ENCODE measurements at regions of chr2 and their contacts with region 1.

Region 1: DNA sequence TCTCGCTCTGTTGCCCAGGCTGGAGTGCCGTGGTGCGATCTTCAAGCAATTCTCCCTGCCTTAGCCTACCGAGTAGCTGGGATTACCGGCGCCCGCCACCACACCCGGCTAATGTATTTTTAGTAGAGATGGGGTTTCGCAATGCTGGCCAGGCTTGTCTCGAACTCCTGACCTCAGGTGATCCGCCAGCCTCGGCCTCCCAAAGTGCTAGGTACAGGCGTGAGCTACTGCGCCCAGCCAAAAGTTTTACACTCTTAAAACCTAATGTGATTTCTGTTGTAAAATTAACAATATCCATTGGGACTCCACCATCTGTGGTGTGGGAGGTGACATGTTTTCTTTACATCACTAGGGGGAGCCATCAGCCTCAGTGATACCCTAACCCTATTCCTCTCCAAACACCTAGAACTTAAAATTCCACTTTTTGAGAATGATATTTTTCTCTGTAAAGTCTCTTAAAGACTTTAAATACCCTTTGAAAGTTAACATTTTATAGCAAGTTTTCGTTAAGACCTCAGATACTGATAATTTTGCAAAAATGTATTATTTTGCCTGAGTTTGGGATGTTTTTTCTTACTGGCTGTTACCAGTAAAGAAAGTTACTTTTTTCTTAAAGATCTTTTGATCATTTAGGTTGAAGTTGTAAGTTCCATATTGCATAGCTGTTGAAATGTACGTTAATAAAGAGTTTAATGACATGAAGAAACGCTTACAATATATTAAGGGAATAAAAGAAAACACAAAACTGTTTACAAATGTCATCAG is 11.6 kb upstream of the EIF2AK2 start:
- DNase-seq: peak in 3 of 9 experiments; percentile 10 to 62 (median 51)
- ATAC-seq: peak; percentile 71
- H3K4me3 ChIP-seq: no peak overlapping the region
- H3K4me3 Mint-ChIP-seq: no peak overlapping the region
- H3K27ac ChIP-seq: no peak overlapping the region
- H3K27ac Mint-ChIP-seq: no peak overlapping the region
- H3K4me1 ChIP-seq: no peaks in the 10 kb centered on the region
- H3K4me1 Mint-ChIP-seq: no peaks in the 10 kb centered on the region
- H3K27me3 ChIP-seq: peaks cover 0 to 2% of the 10 kb centered on the region in 2 experiments
- H3K27me3 Mint-ChIP-seq: peaks cover 2% of the 10 kb centered on the region
- CTCF ChIP-seq: peak; percentile 79

Region 2: DNA sequence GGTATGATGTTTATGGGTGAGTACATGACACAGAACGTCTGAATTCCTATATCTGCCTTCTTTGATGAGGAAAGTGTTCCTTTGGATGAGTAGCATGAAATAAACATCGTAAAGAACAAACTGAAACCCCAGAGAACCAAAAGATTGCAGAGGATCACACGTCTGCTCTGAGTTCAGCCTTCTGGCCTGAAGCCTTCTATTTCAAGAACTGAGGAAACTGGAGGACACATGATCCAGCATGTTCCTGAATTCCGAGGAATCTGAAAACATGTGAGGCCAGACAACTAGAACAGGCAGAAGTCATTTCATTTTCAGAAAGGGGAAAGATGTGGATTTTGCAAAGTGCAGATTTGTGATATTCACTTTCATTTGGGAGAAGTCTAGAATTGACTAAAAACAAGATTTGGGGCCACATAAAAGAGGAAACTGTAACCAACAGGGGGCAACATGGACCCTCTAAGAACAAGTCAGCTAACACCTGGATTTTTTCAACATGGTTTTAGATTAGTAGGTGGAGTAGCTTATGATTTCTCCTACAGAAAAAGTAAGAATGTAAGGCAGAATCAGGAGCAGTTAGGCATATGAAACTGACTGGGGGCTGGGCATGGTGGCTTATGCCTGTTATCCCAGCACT is 11.7 kb after region 1 on chr2:
- CTCF ChIA-PET with region 1: interaction called, 24 read pairs
- POLR2A ChIA-PET with region 1: no interaction called
- intact Hi-C with region 1: no loop called
- DNase-seq: peak in 1 of 9 experiments; percentile 33
- ATAC-seq: no peak
- H3K4me3 ChIP-seq: no peak overlapping the region
- H3K4me3 Mint-ChIP-seq: no peak overlapping the region
- H3K27ac ChIP-seq: no peak overlapping the region
- H3K27ac Mint-ChIP-seq: no peak overlapping the region
- H3K4me1 ChIP-seq: no peaks in the 10 kb centered on the region
- H3K4me1 Mint-ChIP-seq: no peaks in the 10 kb centered on the region
- H3K27me3 ChIP-seq: no peaks in the 10 kb centered on the region
- H3K27me3 Mint-ChIP-seq: peaks cover 8% of the 10 kb centered on the region
- CTCF ChIP-seq: no peak

Region 3: GRCh38 chr2:37287966-37288365 is 119.6 kb after region 1 on chr2:
- CTCF ChIA-PET with region 1: no interaction called
- POLR2A ChIA-PET with region 1: no interaction called
- intact Hi-C with region 1: loop called in 1 of 2 experiments (anchors 5 kb)
- DNase-seq: peak in 2 of 9 experiments; percentile 28 to 34
- ATAC-seq: no peak
- H3K4me3 ChIP-seq: no peak overlapping the region
- H3K4me3 Mint-ChIP-seq: no peak overlapping the region
- H3K27ac ChIP-seq: no peak overlapping the region
- H3K27ac Mint-ChIP-seq: no peak overlapping the region
- H3K4me1 ChIP-seq: no peaks in the 10 kb centered on the region
- H3K4me1 Mint-ChIP-seq: no peaks in the 10 kb centered on the region
- H3K27me3 ChIP-seq: no peaks in the 10 kb centered on the region
- H3K27me3 Mint-ChIP-seq: no peaks in the 10 kb centered on the region
- CTCF ChIP-seq: no peak